Activated CD4-positive, alpha-beta T cell treated with anti-CD3 and anti-CD28 coated beads, Interleukin-2, amount 10 ng/mL, durations not matched to agents 7 days and 5 days (primary cell): ENCODE measurements at regions of chr6 and their contacts with region 1.

Region 1: GRCh38 chr6:106163446-106163965 is 77.4 kb downstream of the PRDM1 start:
- DNase-seq: peak; percentile 57
- H3K4me3 Mint-ChIP-seq: peak overlapping the region; percentile 23
- H3K27ac Mint-ChIP-seq: peak overlapping the region; percentile 95
- H3K4me1 Mint-ChIP-seq: peaks cover 41% of the 10 kb centered on the region
- H3K27me3 Mint-ChIP-seq: no peaks in the 10 kb centered on the region

Region 2: GRCh38 chr6:106141441-106142237 is 21.9 kb before region 1 on chr6:
- CTCF ChIA-PET with region 1: interaction called, 52 read pairs
- POLR2A ChIA-PET with region 1: no interaction called
- DNase-seq: peak; percentile 59
- H3K4me3 Mint-ChIP-seq: peak overlapping the region; percentile 61
- H3K27ac Mint-ChIP-seq: peak overlapping the region; percentile 95
- H3K4me1 Mint-ChIP-seq: peaks cover 60% of the 10 kb centered on the region
- H3K27me3 Mint-ChIP-seq: no peaks in the 10 kb centered on the region

Region 3: DNA sequence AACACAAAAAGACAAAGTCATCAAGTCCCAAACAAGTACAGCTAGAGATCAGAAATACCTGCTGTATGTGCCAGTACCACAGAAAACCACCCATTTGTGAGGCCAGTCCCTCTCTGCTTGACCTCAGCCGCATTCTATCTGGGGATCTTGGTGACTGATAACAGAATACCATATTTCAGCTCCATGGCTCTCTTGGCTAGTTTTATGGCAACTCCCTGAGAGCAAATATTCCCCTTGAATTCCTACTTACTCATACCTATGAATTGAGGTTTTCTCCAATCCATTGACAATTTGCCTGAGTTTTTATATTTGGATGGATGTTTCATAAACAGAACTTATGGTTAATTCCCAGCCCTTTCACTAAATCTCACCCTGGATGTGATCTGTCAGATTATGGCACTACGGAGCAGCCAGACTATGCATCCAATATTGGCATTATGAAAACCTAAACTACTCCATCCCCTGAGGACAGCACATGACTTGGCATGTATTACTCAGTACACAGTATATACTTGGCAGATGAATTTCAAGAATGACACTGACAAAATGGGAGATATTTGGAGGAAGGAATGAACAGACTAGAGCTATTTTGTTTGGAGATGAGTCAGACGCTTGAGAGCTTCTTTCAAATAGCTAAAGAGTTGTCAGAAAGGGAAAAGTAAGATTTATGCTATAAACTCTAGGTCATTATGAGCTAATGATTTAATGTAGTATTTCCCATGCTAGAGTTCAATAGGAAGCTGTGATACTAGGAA is 18.3 kb after region 1 on chr6:
- CTCF ChIA-PET with region 1: interaction called, 14 read pairs
- POLR2A ChIA-PET with region 1: interaction called, 5 read pairs
- DNase-seq: no peak
- H3K4me3 Mint-ChIP-seq: no peak overlapping the region
- H3K27ac Mint-ChIP-seq: no peak overlapping the region
- H3K4me1 Mint-ChIP-seq: peaks cover 40% of the 10 kb centered on the region
- H3K27me3 Mint-ChIP-seq: no peaks in the 10 kb centered on the region

Region 4: DNA sequence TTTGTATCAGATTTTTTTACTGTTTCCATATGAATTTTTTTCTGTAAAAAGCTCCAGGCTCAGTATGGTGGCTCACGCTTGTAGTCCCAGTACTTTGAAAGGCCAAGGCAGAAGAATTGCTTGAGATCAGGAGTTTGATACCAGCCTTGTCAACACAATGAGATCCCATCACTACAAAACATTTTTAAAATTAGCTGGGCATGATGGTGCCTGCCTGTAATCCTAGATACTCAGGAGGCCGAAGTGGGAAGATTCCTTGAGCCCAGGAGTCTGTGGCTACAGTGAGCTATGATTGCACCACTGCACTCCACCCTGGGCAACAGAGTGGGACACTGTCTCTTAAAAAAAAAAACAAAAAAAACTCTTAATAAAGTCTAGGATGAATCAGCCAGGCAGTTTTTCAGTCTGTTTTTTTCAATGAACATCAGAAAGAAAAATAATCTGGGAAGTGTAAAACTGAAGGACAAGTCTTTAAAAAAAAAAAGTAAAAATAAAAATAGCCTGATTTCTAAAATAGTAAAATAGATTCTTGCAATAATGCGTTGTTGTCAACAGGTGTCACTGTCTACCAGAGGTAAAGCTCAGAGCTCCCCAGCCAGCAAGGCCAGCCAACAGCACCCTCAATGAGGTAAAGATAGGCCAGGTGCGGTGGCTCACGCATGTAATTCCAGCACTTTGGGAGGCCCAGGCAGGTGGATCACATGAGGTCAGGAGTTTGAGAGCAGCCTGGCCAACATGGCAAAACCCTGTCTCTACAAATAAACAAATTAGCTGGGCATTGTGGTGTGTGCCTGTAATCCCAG is 171.3 kb after region 1 on chr6:
- CTCF ChIA-PET with region 1: no interaction called
- POLR2A ChIA-PET with region 1: no interaction called
- DNase-seq: peak; percentile 58
- H3K4me3 Mint-ChIP-seq: no peak overlapping the region
- H3K27ac Mint-ChIP-seq: no peak overlapping the region
- H3K4me1 Mint-ChIP-seq: peaks cover 7% of the 10 kb centered on the region
- H3K27me3 Mint-ChIP-seq: peaks cover 44% of the 10 kb centered on the region

Region 5: DNA sequence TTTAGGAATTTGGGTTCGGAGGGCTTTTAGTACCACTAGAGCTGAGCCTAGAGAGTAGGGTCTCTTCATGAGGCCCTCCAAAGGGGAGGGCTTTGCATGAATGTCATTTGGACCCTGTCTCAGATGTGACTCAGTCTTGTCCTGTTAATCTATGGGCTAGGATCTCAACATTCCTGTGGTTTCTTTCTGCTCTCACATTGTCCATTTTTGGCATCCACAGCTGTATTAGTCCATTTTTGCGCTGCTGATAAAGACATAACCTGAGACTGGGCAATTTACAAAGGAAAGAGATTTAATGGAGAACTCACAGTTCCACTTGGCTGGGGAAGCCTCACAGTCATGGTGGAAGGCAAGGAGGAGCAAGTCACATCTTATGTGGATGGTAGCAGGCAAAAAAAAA is 258.0 kb after region 1 on chr6:
- CTCF ChIA-PET with region 1: no interaction called
- POLR2A ChIA-PET with region 1: no interaction called
- DNase-seq: no peak
- H3K4me3 Mint-ChIP-seq: no peak overlapping the region
- H3K27ac Mint-ChIP-seq: no peak overlapping the region
- H3K4me1 Mint-ChIP-seq: no peaks in the 10 kb centered on the region
- H3K27me3 Mint-ChIP-seq: peaks cover 9% of the 10 kb centered on the region